CD4-positive, alpha-beta memory T cell (primary cell): ENCODE measurements at regions of chr16 and their contacts with region 1.

Region 1: DNA sequence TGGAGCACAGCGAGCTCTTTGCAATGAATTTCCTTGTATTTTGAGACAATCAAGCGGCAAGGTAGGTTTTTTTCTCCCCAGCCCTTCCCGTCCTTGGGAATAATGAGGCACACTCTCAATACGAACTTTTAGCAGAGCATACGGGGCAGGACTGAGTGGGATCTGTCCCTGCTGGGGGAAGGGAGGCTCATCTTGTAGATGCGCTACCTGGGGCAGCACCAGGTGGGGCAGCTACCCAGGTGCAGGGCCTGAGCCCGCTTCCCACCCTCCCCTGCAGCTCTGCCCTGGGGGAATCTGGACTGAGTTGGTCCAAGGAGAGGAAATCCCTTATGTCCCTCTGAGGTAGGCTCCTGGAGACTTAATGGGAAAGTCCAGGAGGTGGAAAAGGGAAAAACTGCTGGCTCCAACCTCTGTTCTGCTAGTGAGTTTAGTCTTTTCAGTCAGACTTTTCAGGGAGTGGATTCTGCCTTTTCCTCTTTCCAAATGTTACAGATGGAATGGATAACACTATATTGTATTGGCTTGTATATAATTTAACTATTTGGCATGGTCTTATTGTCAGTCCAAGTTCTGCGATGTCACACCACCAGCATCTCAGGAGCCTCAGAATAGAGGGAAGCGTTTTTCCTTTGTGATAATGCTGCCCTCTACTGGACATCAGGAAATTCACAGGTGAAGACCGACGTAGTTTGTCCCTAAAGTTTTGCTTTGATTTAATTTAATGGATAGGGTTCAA is 9.6 kb upstream of the CES1 start:
- DNase-seq: peak in 4 of 5 donors; percentile 24 to 41 (median 34)
- H3K4me3 ChIP-seq: no peak overlapping the region
- H3K4me3 Mint-ChIP-seq: no peak overlapping the region
- H3K27ac ChIP-seq: no peak overlapping the region
- H3K27ac Mint-ChIP-seq: no peak overlapping the region
- H3K4me1 ChIP-seq: no peaks in the 10 kb centered on the region
- H3K4me1 Mint-ChIP-seq: peaks cover 0 to 4% (median 3%) of the 10 kb centered on the region in 4 donors
- H3K27me3 ChIP-seq: peaks cover 3% of the 10 kb centered on the region
- H3K27me3 Mint-ChIP-seq: peaks cover 11 to 13% of the 10 kb centered on the region in 2 donors

Region 2: GRCh38 chr16:53892155-53892554 is 1950.4 kb before region 1 on chr16:
- CTCF ChIA-PET with region 1: no interaction called
- POLR2A ChIA-PET with region 1: no interaction called
- intact Hi-C with region 1: loop called (anchors 5 kb)
- DNase-seq: peak in 4 of 5 donors; percentile 38 to 51 (median 43)
- H3K4me3 ChIP-seq: no peak overlapping the region
- H3K4me3 Mint-ChIP-seq: peak overlapping the region in 2 of 8 donors; percentile 17 to 33
- H3K27ac ChIP-seq: no peak overlapping the region
- H3K27ac Mint-ChIP-seq: peak overlapping the region in 5 of 7 donors; percentile 18 to 84 (median 43)
- H3K4me1 ChIP-seq: no peaks in the 10 kb centered on the region
- H3K4me1 Mint-ChIP-seq: peaks cover 4 to 11% (median 5%) of the 10 kb centered on the region in 4 donors
- H3K27me3 ChIP-seq: no peaks in the 10 kb centered on the region
- H3K27me3 Mint-ChIP-seq: no peaks in the 10 kb centered on the region

Region 3: DNA sequence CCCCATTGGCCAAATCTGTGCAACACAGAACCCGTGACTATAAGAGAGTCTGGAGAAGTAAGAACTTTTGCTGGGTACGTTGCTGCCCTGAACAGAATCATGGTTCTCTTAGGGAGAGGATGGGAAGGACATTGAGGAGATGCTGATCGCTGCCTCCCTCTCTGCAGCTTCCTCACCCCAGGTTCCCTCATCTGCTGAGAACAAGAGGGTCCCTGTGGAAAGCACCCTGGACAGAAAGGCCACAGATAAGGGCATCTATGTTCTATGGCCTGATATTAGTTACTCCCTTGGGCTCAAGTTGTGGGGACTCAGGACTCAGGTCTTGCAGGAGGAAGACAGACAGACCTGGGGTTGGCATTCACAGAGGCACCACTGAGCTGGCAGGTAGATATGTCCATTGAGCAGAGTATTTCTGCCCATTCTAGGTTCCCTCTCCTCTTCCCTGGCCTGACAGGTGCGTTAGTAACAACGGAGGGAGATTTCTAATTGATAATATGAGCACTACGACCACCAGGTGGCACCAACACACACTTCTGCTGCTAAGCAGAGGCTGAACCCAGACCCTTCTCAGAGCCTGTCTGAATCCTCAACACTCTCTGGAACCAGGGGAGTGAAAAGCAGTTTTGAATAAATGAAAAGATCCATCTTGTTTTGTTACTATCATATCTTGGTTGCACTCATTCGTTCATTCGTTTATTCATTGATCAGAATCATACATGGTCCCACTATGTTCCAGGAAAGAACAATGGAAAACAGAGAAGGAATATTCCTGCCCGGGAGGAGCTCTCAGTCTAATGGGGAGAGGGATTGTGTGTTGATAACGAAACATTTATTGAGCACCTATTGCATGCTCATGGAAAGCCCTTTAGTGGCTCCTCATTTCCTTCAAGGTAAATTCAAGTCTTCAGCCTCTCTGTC is 130.3 kb before region 1 on chr16:
- CTCF ChIA-PET with region 1: interaction called, 53 read pairs
- POLR2A ChIA-PET with region 1: no interaction called
- intact Hi-C with region 1: loop called (anchors 1 kb)
- DNase-seq: peak in 4 of 5 donors; percentile 27 to 52 (median 45)
- H3K4me3 ChIP-seq: no peak overlapping the region
- H3K4me3 Mint-ChIP-seq: no peak overlapping the region
- H3K27ac ChIP-seq: no peak overlapping the region
- H3K27ac Mint-ChIP-seq: no peak overlapping the region
- H3K4me1 ChIP-seq: no peaks in the 10 kb centered on the region
- H3K4me1 Mint-ChIP-seq: peaks cover 0 to 2% (median under 1%) of the 10 kb centered on the region in 4 donors
- H3K27me3 ChIP-seq: peaks cover 4% of the 10 kb centered on the region
- H3K27me3 Mint-ChIP-seq: peaks cover 6 to 27% of the 10 kb centered on the region in 2 donors

Region 4: GRCh38 chr16:55876854-55877253 is 34.3 kb after region 1 on chr16:
- CTCF ChIA-PET with region 1: no interaction called
- POLR2A ChIA-PET with region 1: no interaction called
- intact Hi-C with region 1: no loop called
- DNase-seq: no peak
- H3K4me3 ChIP-seq: no peak overlapping the region
- H3K4me3 Mint-ChIP-seq: no peak overlapping the region
- H3K27ac ChIP-seq: no peak overlapping the region
- H3K27ac Mint-ChIP-seq: no peak overlapping the region
- H3K4me1 ChIP-seq: no peaks in the 10 kb centered on the region
- H3K4me1 Mint-ChIP-seq: no peaks in the 10 kb centered on the region
- H3K27me3 ChIP-seq: no peaks in the 10 kb centered on the region
- H3K27me3 Mint-ChIP-seq: peaks cover 5 to 9% of the 10 kb centered on the region in 2 donors